Right ventricle myocardium superior (tissue), 1 donor: ENCODE measurements at regions of chr6 and their contacts with region 1.

Region 1: GRCh38 chr6:117352466-117353081 is 73.2 kb downstream of the ROS1 start:
- DNase-seq: no peak
- ATAC-seq: peak; percentile 49

Region 2: GRCh38 chr6:117449549-117450439 is 97.2 kb after region 1 on chr6:
- intact Hi-C with region 1: loop called (anchors 10 kb)
- DNase-seq: no peak
- ATAC-seq: peak; percentile 43

Region 3: GRCh38 chr6:117555882-117556498 is 203.4 kb after region 1 on chr6:
- intact Hi-C with region 1: loop called (anchors 5 kb)
- DNase-seq: no peak
- ATAC-seq: peak; percentile 51

Region 4: DNA sequence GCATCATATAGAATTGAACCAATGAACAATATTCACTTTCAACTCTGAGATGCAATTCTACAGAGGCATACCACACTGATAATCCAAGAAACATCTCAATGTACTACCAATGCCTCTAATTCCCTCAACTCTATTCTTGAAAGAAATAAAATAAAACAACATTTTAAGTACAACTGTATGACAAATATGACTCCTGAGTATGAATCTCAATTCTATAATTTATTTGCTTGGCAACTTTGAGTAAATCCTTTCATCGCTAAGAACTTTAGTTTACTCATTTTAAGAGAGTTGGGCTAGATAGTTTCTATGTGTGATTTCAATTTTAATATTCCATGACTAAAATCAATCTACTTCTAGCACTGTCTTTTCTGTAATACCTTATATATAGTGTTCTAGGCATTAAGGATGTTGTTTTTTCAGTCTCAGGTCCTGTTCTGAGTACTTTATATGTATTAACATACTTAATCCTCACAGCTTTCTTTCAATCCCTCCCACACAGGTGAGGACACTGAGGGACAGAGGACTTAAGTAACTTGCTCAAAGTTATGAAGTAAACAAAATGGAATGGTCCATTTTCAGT is 216.3 kb after region 1 on chr6:
- intact Hi-C with region 1: no loop called
- DNase-seq: no peak
- ATAC-seq: no peak